Stomach (tissue), 19 donors: ENCODE measurements at regions of chr19 and their contacts with region 1.

Region 1: DNA sequence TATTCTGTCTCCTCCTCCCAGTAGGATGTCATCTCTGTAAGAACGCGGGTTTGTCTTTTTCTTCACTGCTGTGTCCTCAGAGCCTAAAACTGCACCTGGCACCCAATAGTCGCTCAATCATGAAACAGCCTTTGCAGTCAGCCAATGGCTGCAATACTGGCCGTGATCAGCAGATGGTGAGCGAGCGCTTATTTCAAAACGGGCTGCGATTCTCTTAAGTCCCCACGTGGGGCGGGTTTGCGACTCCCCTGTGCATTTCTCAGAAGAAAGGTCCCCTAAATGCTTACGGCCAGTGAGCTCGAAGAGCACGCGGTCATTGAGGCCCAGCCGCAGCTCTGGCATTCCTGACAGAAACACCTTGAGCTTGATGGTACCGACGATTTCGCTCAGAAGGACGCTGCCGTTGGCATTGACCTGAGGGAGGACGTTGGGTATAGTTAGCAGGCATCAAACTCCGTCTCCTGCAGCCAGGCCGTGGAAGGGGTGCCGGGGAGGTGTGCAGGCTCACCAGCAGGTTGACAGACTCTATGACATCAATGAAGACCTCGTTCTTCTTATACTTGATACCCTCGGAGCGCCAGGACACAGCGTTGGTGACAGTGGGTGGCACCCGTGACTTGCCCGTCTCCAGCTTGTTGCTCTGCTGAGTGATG is 6.0 kb downstream of the AP1M2 start:
- DNase-seq: peak; percentile 92 to 96
- H3K4me3 ChIP-seq: no peak overlapping the region
- H3K27ac ChIP-seq: no peak overlapping the region
- H3K4me1 ChIP-seq: peaks cover 0 to 25% (median 12%) of the 10 kb centered on the region in 4 donors
- H3K27me3 ChIP-seq: no peaks in the 10 kb centered on the region
- CTCF ChIP-seq: peak in 6 of 7 experiments; percentile 8 to 99 (median 98)
- EP300 ChIP-seq: no peak
- POLR2A ChIP-seq: no peak

Region 2: GRCh38 chr19:10502524-10503001 is 78.5 kb before region 1 on chr19:
- intact Hi-C with region 1: no loop called
- DNase-seq: peak; percentile 96 to 97
- H3K4me3 ChIP-seq: peak overlapping the region; percentile 67 to 94 (median 80)
- H3K27ac ChIP-seq: peak overlapping the region; percentile 96 to 99 (median 98)
- H3K4me1 ChIP-seq: peaks cover 31 to 61% (median 54%) of the 10 kb centered on the region in 4 donors
- H3K27me3 ChIP-seq: no peaks in the 10 kb centered on the region
- CTCF ChIP-seq: no peak
- EP300 ChIP-seq: no peak
- POLR2A ChIP-seq: no peak

Region 3: GRCh38 chr19:10644260-10645007 is 63.3 kb after region 1 on chr19:
- intact Hi-C with region 1: loop called (anchors 2 kb)
- DNase-seq: peak; percentile 87 to 95
- H3K4me3 ChIP-seq: no peak overlapping the region
- H3K27ac ChIP-seq: peak overlapping the region; percentile 49 to 66 (median 55)
- H3K4me1 ChIP-seq: peaks cover 17 to 52% (median 27%) of the 10 kb centered on the region in 4 donors
- H3K27me3 ChIP-seq: no peaks in the 10 kb centered on the region
- CTCF ChIP-seq: peak in 5 of 7 experiments; percentile 75 to 96 (median 80)
- EP300 ChIP-seq: no peak
- POLR2A ChIP-seq: no peak